ENCODE measurements at regions of chr4 and their contacts with region 1.

Region 1: GRCh38 chr4:181143250-181143854 is 1099.8 kb upstream of the TENM3 start:
- DNase-seq: peak; percentile 56
- ATAC-seq: peak; percentile 87
- H3K4me3 ChIP-seq: no peak overlapping the region
- H3K27ac ChIP-seq: no peak overlapping the region
- H3K4me1 ChIP-seq: no peaks in the 10 kb centered on the region
- H3K27me3 ChIP-seq: peaks cover 8% of the 10 kb centered on the region; the same call in 1 of the 2 replicates
- CTCF ChIP-seq: peak; percentile 69 to 91 (median 70)
- POLR2A ChIP-seq: no peak
- RAD21 ChIP-seq: peak; percentile 87

Region 2: DNA sequence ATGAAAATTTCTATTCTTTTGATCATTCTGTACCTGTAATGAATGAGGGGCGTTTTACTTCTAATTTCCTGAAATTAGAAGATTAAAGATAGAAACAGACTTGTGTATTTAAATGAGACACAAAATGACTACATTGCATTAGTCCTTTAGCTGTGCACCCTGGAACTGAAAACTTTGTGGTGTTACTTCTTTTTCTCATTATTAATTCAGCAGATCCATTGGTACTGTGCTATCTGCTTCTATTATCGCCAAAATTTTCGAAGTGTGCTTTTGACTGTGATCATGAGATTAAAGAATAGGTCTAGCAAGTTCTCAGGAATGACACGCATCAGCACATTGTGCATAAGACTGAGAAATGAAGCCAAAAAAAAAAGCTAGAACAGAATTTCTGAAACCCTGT is 839.0 kb before region 1 on chr4:
- CTCF ChIA-PET with region 1: no interaction called
- POLR2A ChIA-PET with region 1: no interaction called
- RAD21 ChIA-PET with region 1: no interaction called
- intact Hi-C with region 1: no loop called
- DNase-seq: no peak
- ATAC-seq: no peak
- H3K4me3 ChIP-seq: no peak overlapping the region
- H3K27ac ChIP-seq: no peak overlapping the region
- H3K4me1 ChIP-seq: no peaks in the 10 kb centered on the region
- H3K27me3 ChIP-seq: no peaks in the 10 kb centered on the region
- CTCF ChIP-seq: no peak
- POLR2A ChIP-seq: no peak
- RAD21 ChIP-seq: no peak

Region 3: GRCh38 chr4:182089326-182089725 is 946.0 kb after region 1 on chr4:
- CTCF ChIA-PET with region 1: no interaction called
- POLR2A ChIA-PET with region 1: no interaction called
- RAD21 ChIA-PET with region 1: no interaction called
- intact Hi-C with region 1: loop called (anchors 10 kb)
- DNase-seq: peak; percentile 2
- ATAC-seq: no peak
- H3K4me3 ChIP-seq: no peak overlapping the region
- H3K27ac ChIP-seq: no peak overlapping the region
- H3K4me1 ChIP-seq: no peaks in the 10 kb centered on the region
- H3K27me3 ChIP-seq: 0 out of 2 replicates have a peak, but pooled peaks cover 3% of the 10 kb centered on the region
- CTCF ChIP-seq: peak; percentile 35 to 67 (median 49); a peak in 5 of 6 replicates
- POLR2A ChIP-seq: no peak
- RAD21 ChIP-seq: peak; percentile 41

Measured in HCT116 (cell line).